Sigmoid colon (tissue), 7 donors: ENCODE measurements at regions of chr10 and their contacts with region 1.

Region 1: GRCh38 chr10:121448766-121449421 is 149.3 kb downstream of the FGFR2 start:
- DNase-seq: no peak
- H3K4me3 ChIP-seq: no peak overlapping the region
- H3K27ac ChIP-seq: no peak overlapping the region
- H3K4me1 ChIP-seq: peaks cover 0 to 13% (median 0%) of the 10 kb centered on the region in 4 donors
- H3K27me3 ChIP-seq: no peaks in the 10 kb centered on the region
- CTCF ChIP-seq: no peak
- EP300 ChIP-seq: no peak
- POLR2A ChIP-seq: no peak

Region 2: DNA sequence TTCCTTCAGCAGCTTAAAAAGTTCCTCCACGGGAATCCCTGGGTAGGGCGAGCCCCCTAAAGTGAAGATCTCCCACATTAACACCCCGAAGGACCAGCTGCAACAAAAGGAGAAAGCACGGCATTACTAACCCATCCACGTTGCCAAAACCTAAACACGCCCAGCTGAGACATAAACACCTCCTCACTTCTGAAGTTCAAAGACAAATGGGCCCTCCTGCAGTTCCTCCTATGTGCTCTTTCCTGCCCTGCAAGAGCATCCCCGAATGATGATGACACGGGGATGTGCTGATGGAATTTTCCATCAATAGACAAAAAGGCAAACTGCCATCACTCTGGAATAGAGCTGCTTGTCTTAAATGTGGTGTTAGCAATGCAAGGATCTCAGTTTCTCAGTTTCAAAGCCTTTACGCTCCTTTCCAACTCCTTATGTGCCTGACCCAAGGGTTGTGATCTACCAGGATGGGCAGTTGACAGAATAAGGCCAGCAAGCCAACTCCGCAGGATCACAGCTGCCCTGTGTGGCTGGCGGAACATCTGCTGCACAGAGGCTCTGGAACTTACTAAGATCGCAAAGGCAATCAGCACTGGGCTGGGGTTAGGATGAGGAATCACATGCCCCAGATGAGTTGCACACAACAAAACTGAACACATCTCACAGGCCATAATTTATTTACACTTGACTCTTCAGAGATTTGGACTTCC is 36.7 kb after region 1 on chr10:
- intact Hi-C with region 1: loop called (anchors 5 kb)
- DNase-seq: no peak
- H3K4me3 ChIP-seq: no peak overlapping the region
- H3K27ac ChIP-seq: peak overlapping the region in 3 of 4 donors; percentile 7 to 65 (median 50)
- H3K4me1 ChIP-seq: peaks cover 0 to 29% (median 15%) of the 10 kb centered on the region in 4 donors
- H3K27me3 ChIP-seq: no peaks in the 10 kb centered on the region
- CTCF ChIP-seq: no peak
- EP300 ChIP-seq: no peak
- POLR2A ChIP-seq: no peak